ENCODE measurements at regions of chr2 and their contacts with region 1.

Region 1: GRCh38 chr2:55099878-55100820 is 49.9 kb upstream of the RTN4 start:
- DNase-seq: no peak
- H3K4me3 ChIP-seq: no peak overlapping the region
- H3K27ac ChIP-seq: peak overlapping the region; percentile 78 to 88
- H3K4me1 ChIP-seq: peaks cover 0 to 21% of the 10 kb centered on the region in 2 donors
- H3K27me3 ChIP-seq: no peaks in the 10 kb centered on the region
- CTCF ChIP-seq: no peak
- POLR2A ChIP-seq: no peak

Region 2: GRCh38 chr2:55056024-55056521 is 44.1 kb before region 1 on chr2:
- intact Hi-C with region 1: loop called (anchors 5 kb)
- DNase-seq: no peak
- H3K4me3 ChIP-seq: no peak overlapping the region
- H3K27ac ChIP-seq: no peak overlapping the region
- H3K4me1 ChIP-seq: peaks cover 0 to 9% of the 10 kb centered on the region in 2 donors
- H3K27me3 ChIP-seq: no peaks in the 10 kb centered on the region
- CTCF ChIP-seq: no peak
- POLR2A ChIP-seq: no peak

Region 3: DNA sequence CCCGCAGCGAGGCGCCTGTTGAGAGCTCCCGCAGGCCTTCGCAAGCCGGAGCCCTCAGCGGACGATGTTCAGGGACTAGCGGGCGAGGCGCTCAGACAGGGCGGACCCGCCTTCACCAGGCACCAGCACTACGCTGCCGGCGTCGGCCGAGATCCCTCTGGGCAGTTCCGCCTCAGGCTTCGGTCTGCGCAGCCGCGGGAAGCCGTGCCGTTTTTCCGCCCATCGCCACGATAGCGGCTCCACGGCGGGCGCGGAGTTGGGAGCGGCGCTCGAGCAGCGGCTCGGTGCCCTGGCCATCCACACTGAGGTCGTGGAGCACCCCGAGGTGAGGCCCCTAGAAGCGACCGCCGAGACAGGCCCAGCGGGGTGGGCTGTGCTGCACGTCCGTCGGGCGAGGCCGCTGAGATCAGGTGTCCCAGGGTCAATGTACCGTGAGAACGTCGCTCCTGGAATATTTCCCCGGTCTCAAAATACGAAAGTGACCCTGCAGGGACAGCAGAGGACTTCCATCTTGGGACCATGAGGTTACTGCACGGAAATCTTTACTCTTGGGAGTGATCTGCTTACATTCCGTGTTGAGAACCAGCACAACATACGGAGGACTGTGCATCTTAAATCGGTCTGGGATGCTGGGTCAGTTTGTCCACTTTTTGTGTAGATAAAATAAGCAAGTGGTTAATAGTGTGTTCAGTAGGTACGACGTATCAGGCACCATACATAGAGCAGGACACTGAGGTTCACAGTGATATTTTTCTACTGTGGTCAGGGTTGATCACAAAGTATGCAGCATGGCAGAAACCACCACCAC is 182.2 kb after region 1 on chr2:
- intact Hi-C with region 1: no loop called
- DNase-seq: peak; percentile 76 to 84
- H3K4me3 ChIP-seq: peak overlapping the region; percentile 63 to 66
- H3K27ac ChIP-seq: peak overlapping the region; percentile 92
- H3K4me1 ChIP-seq: no peaks in the 10 kb centered on the region
- H3K27me3 ChIP-seq: no peaks in the 10 kb centered on the region
- CTCF ChIP-seq: peak in 1 of 4 experiments; percentile 3
- POLR2A ChIP-seq: peak; percentile 58 to 68